ENCODE measurements at regions of chr2 and their contacts with region 1.

Region 1: DNA sequence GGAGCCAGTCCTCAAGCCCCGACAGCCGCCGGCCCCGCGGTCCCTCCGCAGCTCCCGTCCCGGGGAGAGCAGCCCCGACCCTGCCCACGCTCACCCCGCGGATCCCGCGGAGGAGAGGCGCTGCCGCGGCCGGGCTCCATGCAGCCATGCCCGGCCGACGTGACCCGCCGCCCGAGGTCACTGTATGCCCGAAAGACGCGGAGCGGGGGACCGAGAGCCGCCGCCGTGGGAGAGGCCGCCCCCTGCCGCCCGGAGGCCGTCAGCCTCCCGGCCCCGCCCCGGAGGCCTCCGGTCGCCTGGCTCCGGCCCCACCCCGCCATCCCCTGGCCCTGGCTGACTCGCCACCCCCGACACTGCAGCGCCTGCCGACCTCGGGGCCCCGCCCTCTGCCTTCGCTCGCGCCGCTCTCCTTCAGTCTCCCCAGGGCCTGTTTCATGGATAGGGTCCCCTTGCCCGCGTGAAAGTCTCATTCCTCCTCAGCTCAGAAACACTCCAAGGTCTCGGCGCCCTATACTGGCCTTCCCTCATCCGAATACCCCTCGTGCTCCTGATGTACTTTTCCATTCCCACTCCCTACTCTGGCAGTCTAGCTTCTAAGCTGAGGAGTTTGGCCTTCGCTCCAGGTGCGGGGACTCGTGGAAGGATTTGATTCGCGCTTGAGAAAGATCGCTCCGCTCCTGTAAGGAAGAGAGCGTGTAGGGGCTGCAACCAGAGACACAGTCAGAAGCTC is at the start of gene BOLA3:
- DNase-seq: peak; percentile 88
- H3K4me3 Mint-ChIP-seq: no peak within 1 kb of the TSS
- H3K27ac Mint-ChIP-seq: no peak within 1 kb of the TSS
- H3K4me1 Mint-ChIP-seq: peaks cover 12% of the 10 kb centered on the region
- H3K27me3 Mint-ChIP-seq: no peaks in the 10 kb centered on the region
- total RNA-seq, gene BOLA3: 46.5 to 55.4 TPM

Region 2: GRCh38 chr2:73828818-73829570 is 318.9 kb before region 1 on chr2 and contains the start of gene STAMBP:
- CTCF ChIA-PET with region 1: interaction called, 127 read pairs
- POLR2A ChIA-PET with region 1: interaction called, 9 read pairs
- DNase-seq: peak; percentile 93
- H3K4me3 Mint-ChIP-seq: peak within 1 kb of the TSS; percentile 95
- H3K27ac Mint-ChIP-seq: peak within 1 kb of the TSS; percentile 93
- H3K4me1 Mint-ChIP-seq: peaks cover 43% of the 10 kb centered on the region
- H3K27me3 Mint-ChIP-seq: no peaks in the 10 kb centered on the region
- total RNA-seq, gene STAMBP: 51.1 to 51.2 TPM

Region 3: DNA sequence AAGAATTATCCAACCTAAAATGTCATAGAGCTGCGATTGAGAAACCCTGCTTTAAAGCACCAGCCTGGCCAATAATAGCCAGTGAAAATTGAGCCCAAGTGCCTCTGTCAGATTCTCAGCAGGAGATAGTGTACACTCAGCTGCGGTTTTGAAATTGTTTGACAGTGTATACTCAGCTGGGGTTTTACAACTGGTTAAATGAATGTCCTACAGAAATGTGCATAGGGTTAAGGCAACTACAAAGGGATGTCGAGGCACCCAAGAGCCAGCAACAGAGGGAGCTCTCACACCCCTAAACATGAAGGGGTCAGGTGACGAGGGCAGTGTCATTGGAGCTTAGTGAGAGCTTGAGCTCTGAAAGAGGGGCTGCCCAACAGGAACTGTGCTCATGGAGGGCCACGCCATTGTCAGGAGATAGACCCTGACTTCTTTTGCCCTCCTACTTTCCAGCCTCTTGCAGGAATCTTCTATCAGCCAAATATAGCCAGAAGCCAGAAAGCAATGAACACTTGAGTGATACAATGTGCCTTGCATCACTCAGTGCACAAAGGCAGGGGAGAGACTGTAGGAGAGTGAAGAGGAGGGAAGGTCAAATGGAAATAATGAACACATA is 239.9 kb before region 1 on chr2:
- CTCF ChIA-PET with region 1: interaction called, 10 read pairs
- POLR2A ChIA-PET with region 1: interaction called, 3 read pairs
- DNase-seq: peak; percentile 58
- H3K4me3 Mint-ChIP-seq: no peak overlapping the region
- H3K27ac Mint-ChIP-seq: no peak overlapping the region
- H3K4me1 Mint-ChIP-seq: no peaks in the 10 kb centered on the region
- H3K27me3 Mint-ChIP-seq: no peaks in the 10 kb centered on the region

Region 4: DNA sequence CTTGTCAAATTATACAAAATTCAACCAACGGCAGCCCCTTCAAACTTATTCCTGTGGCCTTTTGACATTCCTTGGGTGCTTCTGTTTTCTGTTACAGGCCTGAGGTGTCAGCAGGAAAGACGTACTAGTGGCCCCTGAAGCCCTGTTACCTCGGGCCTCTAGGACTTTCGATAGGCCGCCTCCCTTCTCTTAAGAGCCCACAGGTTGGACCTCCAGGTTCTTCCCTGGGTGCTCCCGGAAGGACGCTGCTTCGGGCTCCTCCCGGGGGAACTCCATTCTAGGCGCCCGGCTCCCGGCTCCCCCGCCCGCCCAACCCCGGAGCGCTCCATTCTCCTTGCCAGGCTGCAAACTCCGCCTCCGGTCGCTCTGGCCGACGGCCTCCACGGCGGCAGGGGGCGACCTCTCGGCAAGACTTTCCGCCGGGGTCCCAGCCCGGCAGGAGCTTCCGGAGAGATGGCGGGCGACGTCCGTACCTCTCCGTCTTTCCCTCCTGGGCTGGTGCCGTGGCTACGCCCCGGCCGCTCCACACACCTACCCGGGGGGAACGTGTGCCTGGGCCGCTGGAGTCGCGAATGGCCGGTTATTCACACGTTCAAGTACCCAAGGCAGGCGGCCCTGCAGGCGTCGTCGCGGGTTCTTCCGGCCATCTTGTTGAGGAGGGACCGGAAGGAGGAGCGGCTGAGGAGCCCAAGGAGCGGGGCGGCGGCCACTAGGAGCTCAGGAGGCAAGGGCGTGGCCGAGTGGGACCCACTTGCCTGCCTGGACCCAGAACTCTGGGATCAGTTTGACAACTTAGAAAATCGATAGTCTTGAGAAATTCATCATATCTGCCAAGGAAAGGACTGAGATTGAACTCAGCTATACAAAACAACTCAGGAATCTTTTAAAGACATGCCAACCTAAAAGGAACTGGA is 27.7 kb before region 1 on chr2:
- CTCF ChIA-PET with region 1: interaction called, 11 read pairs
- POLR2A ChIA-PET with region 1: interaction called, 9 read pairs
- DNase-seq: peak; percentile 87
- H3K4me3 Mint-ChIP-seq: peak overlapping the region; percentile 79
- H3K27ac Mint-ChIP-seq: peak overlapping the region; percentile 81
- H3K4me1 Mint-ChIP-seq: peaks cover 16% of the 10 kb centered on the region
- H3K27me3 Mint-ChIP-seq: peaks cover 2% of the 10 kb centered on the region

Region 5: GRCh38 chr2:74168739-74169138 is 20.8 kb after region 1 on chr2:
- CTCF ChIA-PET with region 1: interaction called, 15 read pairs
- POLR2A ChIA-PET with region 1: interaction called, 13 read pairs
- DNase-seq: no peak
- H3K4me3 Mint-ChIP-seq: no peak overlapping the region
- H3K27ac Mint-ChIP-seq: peak overlapping the region; percentile 5
- H3K4me1 Mint-ChIP-seq: peaks cover 19% of the 10 kb centered on the region
- H3K27me3 Mint-ChIP-seq: no peaks in the 10 kb centered on the region

Region 6: DNA sequence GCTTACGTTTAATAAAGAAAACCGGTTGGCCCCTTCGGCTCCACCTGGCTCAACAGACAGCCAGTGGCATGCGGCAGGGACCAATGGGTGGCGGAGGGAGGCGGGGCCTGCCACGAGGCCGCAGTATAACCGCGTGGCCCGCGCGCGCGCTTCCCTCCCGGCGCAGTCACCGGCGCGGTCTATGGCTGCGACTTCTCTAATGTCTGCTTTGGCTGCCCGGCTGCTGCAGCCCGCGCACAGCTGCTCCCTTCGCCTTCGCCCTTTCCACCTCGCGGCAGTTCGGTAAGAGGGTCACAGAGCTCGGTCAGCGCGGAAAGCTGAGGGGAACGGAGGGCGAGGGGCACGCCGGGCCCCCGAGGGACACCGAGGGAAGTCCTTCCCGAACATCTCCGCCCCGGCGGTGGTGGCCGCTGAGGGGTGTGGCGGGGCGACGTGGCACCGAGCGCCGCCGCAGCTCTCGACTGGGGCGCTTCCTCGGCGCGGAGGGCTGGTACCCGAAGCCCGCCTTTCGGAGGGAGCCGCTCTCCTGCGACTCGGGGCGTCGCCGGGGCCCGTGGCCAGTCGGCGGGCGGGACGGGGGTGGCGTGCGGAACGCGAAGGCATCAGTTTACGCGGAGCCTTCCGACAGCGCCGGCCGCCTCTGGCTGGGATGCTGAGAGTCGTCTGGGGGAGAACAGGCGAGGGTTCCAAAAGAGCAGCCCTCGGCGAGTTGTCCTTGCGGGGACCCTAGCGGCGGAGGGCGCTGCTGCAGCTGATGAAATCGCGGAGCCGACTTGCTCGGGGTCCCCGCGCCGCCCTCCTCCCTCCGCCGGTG is 50.8 kb after region 1 on chr2 and contains the start of gene MTHFD2:
- CTCF ChIA-PET with region 1: interaction called, 5 read pairs
- POLR2A ChIA-PET with region 1: interaction called, 47 read pairs
- DNase-seq: peak; percentile 94
- H3K4me3 Mint-ChIP-seq: peak within 1 kb of the TSS; percentile 99
- H3K27ac Mint-ChIP-seq: peak within 1 kb of the TSS; percentile 100
- H3K4me1 Mint-ChIP-seq: peaks cover 51% of the 10 kb centered on the region
- H3K27me3 Mint-ChIP-seq: no peaks in the 10 kb centered on the region
- total RNA-seq, gene MTHFD2: 264 to 277 TPM

Region 7: DNA sequence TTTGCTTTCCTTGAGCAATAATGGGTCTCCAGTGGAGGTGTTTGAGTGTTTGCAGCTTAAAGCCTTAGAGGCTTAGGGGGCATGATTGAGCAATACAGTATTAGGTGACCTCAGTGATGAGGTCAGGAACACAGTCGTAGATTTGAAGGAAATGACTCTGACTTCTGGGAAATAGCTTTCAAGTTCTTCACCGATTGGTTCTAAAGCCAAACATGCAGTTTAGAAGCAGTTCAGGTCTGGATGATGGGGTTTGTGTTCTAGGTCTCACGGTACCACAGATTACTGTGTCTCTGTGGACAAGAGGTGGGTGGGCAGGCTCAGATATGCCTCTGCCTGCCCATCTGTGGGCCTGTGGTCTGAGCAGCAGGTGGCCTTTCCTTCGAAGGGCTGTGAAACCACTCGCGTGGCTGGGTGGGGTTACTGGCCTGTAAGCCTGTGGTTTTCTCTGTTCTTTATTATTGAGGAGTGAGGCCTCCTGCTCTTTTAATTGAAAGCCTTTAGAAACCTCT is 58.3 kb after region 1 on chr2:
- CTCF ChIA-PET with region 1: interaction called, 11 read pairs
- POLR2A ChIA-PET with region 1: interaction called, 47 read pairs
- DNase-seq: peak; percentile 67
- H3K4me3 Mint-ChIP-seq: peak overlapping the region; percentile 64
- H3K27ac Mint-ChIP-seq: peak overlapping the region; percentile 96
- H3K4me1 Mint-ChIP-seq: peaks cover 78% of the 10 kb centered on the region
- H3K27me3 Mint-ChIP-seq: no peaks in the 10 kb centered on the region

Region 8: GRCh38 chr2:74261204-74261864 is 113.4 kb after region 1 on chr2:
- CTCF ChIA-PET with region 1: no interaction called
- POLR2A ChIA-PET with region 1: no interaction called
- DNase-seq: no peak
- H3K4me3 Mint-ChIP-seq: no peak overlapping the region
- H3K27ac Mint-ChIP-seq: no peak overlapping the region
- H3K4me1 Mint-ChIP-seq: peaks cover 17% of the 10 kb centered on the region
- H3K27me3 Mint-ChIP-seq: no peaks in the 10 kb centered on the region

Measured in activated CD4-positive, alpha-beta memory T cell treated with anti-CD3 and anti-CD28 coated beads, Interleukin-2, amount 10 ng/mL, durations not matched to agents 7 days and 5 days (primary cell).